ENCODE measurements at regions of chr22 and their contacts with region 1.

Region 1: GRCh38 chr22:36552289-36552688 is 23.3 kb upstream of the EIF3D start:
- DNase-seq: no peak
- H3K4me3 ChIP-seq: no peak overlapping the region
- H3K27ac ChIP-seq: no peak overlapping the region
- H3K4me1 ChIP-seq: no peaks in the 10 kb centered on the region
- H3K27me3 ChIP-seq: peaks cover 0 to 25% of the 10 kb centered on the region in 2 donors
- CTCF ChIP-seq: no peak
- POLR2A ChIP-seq: no peak

Region 2: GRCh38 chr22:37043828-37044538 is 491.7 kb after region 1 on chr22:
- intact Hi-C with region 1: no loop called
- DNase-seq: peak; percentile 57 to 71
- H3K4me3 ChIP-seq: no peak overlapping the region
- H3K27ac ChIP-seq: no peak overlapping the region
- H3K4me1 ChIP-seq: no peaks in the 10 kb centered on the region
- H3K27me3 ChIP-seq: no peaks in the 10 kb centered on the region
- CTCF ChIP-seq: peak; percentile 14 to 68 (median 44)
- POLR2A ChIP-seq: no peak

Region 3: DNA sequence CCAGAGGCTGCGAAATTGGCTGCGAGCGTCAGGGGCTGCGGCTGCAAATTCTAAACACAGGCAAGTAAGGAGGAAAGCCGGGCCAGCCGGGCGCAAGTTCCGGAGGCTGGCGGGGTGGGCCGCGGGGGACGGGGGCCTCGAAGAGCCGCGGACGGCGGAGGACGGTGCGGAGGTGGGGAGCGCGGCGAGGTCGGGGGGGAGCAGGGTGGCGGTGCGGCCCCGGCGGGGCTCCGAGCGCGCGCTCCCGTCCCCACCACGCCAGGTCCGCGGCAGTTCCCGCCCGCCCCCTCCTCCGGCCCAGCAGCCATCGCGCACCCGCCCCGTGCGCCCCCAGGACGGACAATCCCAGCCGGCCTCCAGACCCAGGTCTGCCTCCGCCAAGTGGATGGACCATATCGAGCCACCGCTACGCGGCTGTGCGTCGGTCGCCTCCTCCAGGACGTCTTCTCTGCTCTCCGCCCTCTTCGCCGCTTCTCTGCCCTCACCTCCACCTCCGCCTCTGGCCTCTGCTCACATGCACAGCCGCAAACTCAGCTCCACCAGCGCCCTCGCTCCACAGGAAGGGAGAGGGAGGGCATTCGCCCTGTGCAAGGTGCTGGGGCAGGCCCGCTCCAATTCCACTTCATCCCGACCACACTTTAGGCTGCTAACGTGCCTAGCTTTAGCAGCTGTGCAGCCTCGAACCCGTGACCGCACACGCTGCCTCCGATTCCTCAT is 867.8 kb after region 1 on chr22:
- intact Hi-C with region 1: loop called (anchors 5 kb)
- DNase-seq: no peak
- H3K4me3 ChIP-seq: peak overlapping the region in 2 of 3 donors; percentile 40 to 62
- H3K27ac ChIP-seq: no peak overlapping the region
- H3K4me1 ChIP-seq: peaks cover 5 to 8% of the 10 kb centered on the region in 2 donors
- H3K27me3 ChIP-seq: peaks cover 0 to 84% of the 10 kb centered on the region in 2 donors
- CTCF ChIP-seq: no peak
- POLR2A ChIP-seq: no peak

Measured in breast epithelium (tissue), 4 donors.